CD4-positive, alpha-beta memory T cell (primary cell): ENCODE measurements at regions of chr1 and their contacts with region 1.

Region 1: GRCh38 chr1:155017041-155017945 is 14.7 kb downstream of the ZBTB7B start:
- DNase-seq: peak; percentile 88 to 91 (median 89)
- H3K4me3 ChIP-seq: peak overlapping the region; percentile 11 to 24
- H3K4me3 Mint-ChIP-seq: peak overlapping the region in 7 of 8 donors; percentile 58 to 86 (median 74)
- H3K27ac ChIP-seq: peak overlapping the region; percentile 86
- H3K27ac Mint-ChIP-seq: peak overlapping the region; percentile 76 to 94 (median 85)
- H3K4me1 ChIP-seq: peaks cover 64% of the 10 kb centered on the region
- H3K4me1 Mint-ChIP-seq: peaks cover 46 to 71% (median 64%) of the 10 kb centered on the region in 4 donors
- H3K27me3 ChIP-seq: no peaks in the 10 kb centered on the region
- H3K27me3 Mint-ChIP-seq: no peaks in the 10 kb centered on the region

Region 2: GRCh38 chr1:154358519-154358918 is 658.8 kb before region 1 on chr1:
- CTCF ChIA-PET with region 1: no interaction called
- POLR2A ChIA-PET with region 1: no interaction called
- intact Hi-C with region 1: no loop called
- DNase-seq: no peak
- H3K4me3 ChIP-seq: no peak overlapping the region
- H3K4me3 Mint-ChIP-seq: no peak overlapping the region
- H3K27ac ChIP-seq: no peak overlapping the region
- H3K27ac Mint-ChIP-seq: no peak overlapping the region
- H3K4me1 ChIP-seq: peaks cover 6% of the 10 kb centered on the region
- H3K4me1 Mint-ChIP-seq: peaks cover 6 to 13% (median 12%) of the 10 kb centered on the region in 4 donors
- H3K27me3 ChIP-seq: no peaks in the 10 kb centered on the region
- H3K27me3 Mint-ChIP-seq: no peaks in the 10 kb centered on the region

Region 3: GRCh38 chr1:154669464-154670282 is 347.6 kb before region 1 on chr1:
- CTCF ChIA-PET with region 1: no interaction called
- POLR2A ChIA-PET with region 1: no interaction called
- intact Hi-C with region 1: loop called (anchors 1 kb)
- DNase-seq: peak; percentile 65 to 73 (median 68)
- H3K4me3 ChIP-seq: no peak overlapping the region
- H3K4me3 Mint-ChIP-seq: no peak overlapping the region
- H3K27ac ChIP-seq: no peak overlapping the region
- H3K27ac Mint-ChIP-seq: no peak overlapping the region
- H3K4me1 ChIP-seq: no peaks in the 10 kb centered on the region
- H3K4me1 Mint-ChIP-seq: no peaks in the 10 kb centered on the region
- H3K27me3 ChIP-seq: no peaks in the 10 kb centered on the region
- H3K27me3 Mint-ChIP-seq: peaks cover 2% of the 10 kb centered on the region in 2 donors

Region 4: GRCh38 chr1:154847891-154848290 is 169.4 kb before region 1 on chr1:
- CTCF ChIA-PET with region 1: no interaction called
- POLR2A ChIA-PET with region 1: no interaction called
- intact Hi-C with region 1: no loop called
- DNase-seq: no peak
- H3K4me3 ChIP-seq: no peak overlapping the region
- H3K4me3 Mint-ChIP-seq: no peak overlapping the region
- H3K27ac ChIP-seq: no peak overlapping the region
- H3K27ac Mint-ChIP-seq: peak overlapping the region in 1 of 7 donors; percentile 61
- H3K4me1 ChIP-seq: no peaks in the 10 kb centered on the region
- H3K4me1 Mint-ChIP-seq: no peaks in the 10 kb centered on the region
- H3K27me3 ChIP-seq: no peaks in the 10 kb centered on the region
- H3K27me3 Mint-ChIP-seq: peaks cover 0 to 4% of the 10 kb centered on the region in 2 donors

Region 5: GRCh38 chr1:154961497-154962262 is 55.6 kb before region 1 on chr1 and contains the start of gene PYGO2:
- CTCF ChIA-PET with region 1: interaction called, 70 read pairs
- POLR2A ChIA-PET with region 1: interaction called, 1,543 read pairs
- intact Hi-C with region 1: loop called (anchors 1 kb)
- DNase-seq: peak; percentile 81 to 88 (median 82)
- H3K4me3 ChIP-seq: peak within 1 kb of the TSS; percentile 63 to 65
- H3K4me3 Mint-ChIP-seq: peak within 1 kb of the TSS; percentile 94 to 98 (median 97)
- H3K27ac ChIP-seq: peak within 1 kb of the TSS; percentile 84
- H3K27ac Mint-ChIP-seq: peak within 1 kb of the TSS; percentile 97 to 99 (median 98)
- H3K4me1 ChIP-seq: peaks cover 43% of the 10 kb centered on the region
- H3K4me1 Mint-ChIP-seq: peaks cover 21 to 57% (median 37%) of the 10 kb centered on the region in 4 donors
- H3K27me3 ChIP-seq: no peaks in the 10 kb centered on the region
- H3K27me3 Mint-ChIP-seq: no peaks in the 10 kb centered on the region
- total RNA-seq, gene PYGO2: 78.4 to 80.2 TPM

Region 6: GRCh38 chr1:154982897-154983648 is 34.2 kb before region 1 on chr1 and contains the start of gene FLAD1:
- CTCF ChIA-PET with region 1: interaction called, 226 read pairs
- POLR2A ChIA-PET with region 1: interaction called, 1,543 read pairs
- intact Hi-C with region 1: loop called (anchors 1 kb)
- DNase-seq: peak; percentile 96 to 99 (median 96)
- H3K4me3 ChIP-seq: peak within 1 kb of the TSS; percentile 79 to 92
- H3K4me3 Mint-ChIP-seq: no peak within 1 kb of the TSS
- H3K27ac ChIP-seq: peak within 1 kb of the TSS; percentile 76
- H3K27ac Mint-ChIP-seq: peak within 1 kb of the TSS in 1 of 7 donors; percentile 92
- H3K4me1 ChIP-seq: peaks cover 27% of the 10 kb centered on the region
- H3K4me1 Mint-ChIP-seq: peaks cover 4 to 8% (median 6%) of the 10 kb centered on the region in 4 donors
- H3K27me3 ChIP-seq: no peaks in the 10 kb centered on the region
- H3K27me3 Mint-ChIP-seq: no peaks in the 10 kb centered on the region
- total RNA-seq, gene FLAD1: 52.4 to 56.6 TPM

Region 7: GRCh38 chr1:155001675-155002463 is 15.4 kb before region 1 on chr1:
- CTCF ChIA-PET with region 1: interaction called, 381 read pairs
- POLR2A ChIA-PET with region 1: interaction called, 314 read pairs
- intact Hi-C with region 1: loop called (anchors 1 kb)
- DNase-seq: peak; percentile 95 to 98 (median 97)
- H3K4me3 ChIP-seq: peak overlapping the region; percentile 78 to 80
- H3K4me3 Mint-ChIP-seq: peak overlapping the region; percentile 88 to 99 (median 96)
- H3K27ac ChIP-seq: peak overlapping the region; percentile 92
- H3K27ac Mint-ChIP-seq: peak overlapping the region; percentile 90 to 99 (median 95)
- H3K4me1 ChIP-seq: peaks cover 59% of the 10 kb centered on the region
- H3K4me1 Mint-ChIP-seq: peaks cover 39 to 78% (median 51%) of the 10 kb centered on the region in 4 donors
- H3K27me3 ChIP-seq: no peaks in the 10 kb centered on the region
- H3K27me3 Mint-ChIP-seq: no peaks in the 10 kb centered on the region

Region 8: GRCh38 chr1:155050560-155051341 is 33.5 kb after region 1 on chr1 and contains the start of gene ADAM15:
- CTCF ChIA-PET with region 1: interaction called, 26 read pairs
- POLR2A ChIA-PET with region 1: interaction called, 4 read pairs
- intact Hi-C with region 1: loop called (anchors 1 kb)
- DNase-seq: peak; percentile 74 to 79 (median 77)
- H3K4me3 ChIP-seq: peak within 1 kb of the TSS; percentile 69 to 92
- H3K4me3 Mint-ChIP-seq: peak within 1 kb of the TSS; percentile 86 to 92 (median 88)
- H3K27ac ChIP-seq: peak within 1 kb of the TSS; percentile 71
- H3K27ac Mint-ChIP-seq: peak within 1 kb of the TSS; percentile 70 to 93 (median 90)
- H3K4me1 ChIP-seq: peaks cover 27% of the 10 kb centered on the region
- H3K4me1 Mint-ChIP-seq: peaks cover 14 to 33% (median 27%) of the 10 kb centered on the region in 4 donors
- H3K27me3 ChIP-seq: no peaks in the 10 kb centered on the region
- H3K27me3 Mint-ChIP-seq: no peaks in the 10 kb centered on the region
- total RNA-seq, gene ADAM15: 33.6 to 39.8 TPM

Region 9: DNA sequence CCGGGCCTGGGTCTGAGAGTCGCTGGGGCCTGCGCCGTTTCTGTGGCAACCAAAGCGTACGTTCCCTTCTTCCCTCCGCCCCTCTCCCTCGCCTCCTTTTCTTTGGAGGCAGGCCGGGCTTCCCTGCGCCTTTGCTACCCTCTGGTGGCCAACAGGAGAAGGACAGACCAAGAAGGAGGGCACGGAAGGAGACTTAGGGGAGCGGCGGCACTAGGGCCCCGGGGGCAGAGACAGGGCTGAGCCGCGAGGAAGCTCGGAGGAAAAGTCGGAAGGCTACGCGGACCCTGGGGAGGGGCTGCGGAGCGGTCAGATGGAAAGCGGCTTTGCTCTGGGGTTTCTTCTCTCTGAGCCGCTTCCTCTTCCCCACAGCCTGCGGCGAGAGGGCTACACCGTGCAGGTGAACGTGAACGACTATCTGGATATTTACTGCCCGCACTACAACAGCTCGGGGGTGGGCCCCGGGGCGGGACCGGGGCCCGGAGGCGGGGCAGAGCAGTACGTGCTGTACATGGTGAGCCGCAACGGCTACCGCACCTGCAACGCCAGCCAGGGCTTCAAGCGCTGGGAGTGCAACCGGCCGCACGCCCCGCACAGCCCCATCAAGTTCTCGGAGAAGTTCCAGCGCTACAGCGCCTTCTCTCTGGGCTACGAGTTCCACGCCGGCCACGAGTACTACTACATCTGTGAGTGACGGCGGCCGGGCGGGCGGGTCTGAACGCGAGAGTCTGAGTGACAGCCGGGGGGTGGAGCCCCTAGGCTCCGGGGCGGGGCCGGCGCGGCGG is 67.6 kb after region 1 on chr1:
- CTCF ChIA-PET with region 1: interaction called, 5 read pairs
- POLR2A ChIA-PET with region 1: interaction called, 10 read pairs
- intact Hi-C with region 1: no loop called
- DNase-seq: peak; percentile 92 to 96 (median 92)
- H3K4me3 ChIP-seq: peak overlapping the region; percentile 80 to 95
- H3K4me3 Mint-ChIP-seq: peak overlapping the region; percentile 91 to 98 (median 94)
- H3K27ac ChIP-seq: peak overlapping the region; percentile 54
- H3K27ac Mint-ChIP-seq: peak overlapping the region; percentile 88 to 98 (median 94)
- H3K4me1 ChIP-seq: peaks cover 57% of the 10 kb centered on the region
- H3K4me1 Mint-ChIP-seq: peaks cover 22 to 44% (median 34%) of the 10 kb centered on the region in 4 donors
- H3K27me3 ChIP-seq: peaks cover 34% of the 10 kb centered on the region
- H3K27me3 Mint-ChIP-seq: peaks cover 13 to 30% of the 10 kb centered on the region in 2 donors